Posterior vena cava (tissue), 2 donors: ENCODE measurements at regions of chr10 and their contacts with region 1.

Region 1: GRCh38 chr10:132229834-132230556 is 43.2 kb downstream of the DPYSL4 start:
- DNase-seq: no peak

Region 2: DNA sequence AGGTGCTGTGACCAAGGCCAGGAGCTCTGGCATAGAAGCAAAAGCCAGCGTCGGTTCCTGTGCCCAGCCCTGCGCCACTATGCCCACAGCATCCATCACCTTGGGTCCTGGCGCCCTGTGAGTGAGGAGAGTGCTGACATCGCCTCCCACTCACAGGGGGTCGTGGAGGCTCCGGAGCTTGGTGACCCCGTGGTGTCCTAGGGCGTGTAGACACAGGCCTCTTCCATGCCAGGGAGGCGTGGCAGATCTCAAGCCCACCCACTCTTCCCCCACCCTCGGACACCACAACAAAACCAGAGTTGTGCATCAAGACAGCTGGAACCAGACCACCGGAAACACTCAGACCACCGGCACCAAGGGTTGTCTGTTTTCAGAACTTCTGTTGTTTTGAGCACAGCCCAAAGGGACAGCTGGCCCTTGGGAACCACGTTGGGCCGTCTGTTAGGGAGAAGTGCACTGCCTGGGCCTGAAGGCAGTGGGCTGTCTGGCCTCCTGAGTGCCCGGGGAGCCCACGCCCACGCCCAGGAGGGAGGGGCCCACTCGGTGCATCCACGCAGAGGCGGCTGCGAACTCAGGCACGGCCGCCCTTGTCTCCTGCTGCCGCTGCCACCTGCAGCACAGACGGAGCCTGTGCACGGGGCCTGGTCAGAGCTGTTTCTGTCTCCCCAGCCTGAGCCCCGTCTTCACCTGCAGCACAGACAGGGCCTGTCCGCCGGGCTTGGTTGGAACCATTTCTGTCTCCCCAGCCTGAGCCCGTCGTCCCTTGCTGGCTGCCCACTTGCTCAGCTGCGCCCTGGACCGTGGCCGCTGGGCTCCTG is 413.9 kb after region 1 on chr10:
- intact Hi-C with region 1: loop called in 1 of 2 experiments (anchors 10 kb)
- DNase-seq: no peak